Left colon (tissue), 2 donors: ENCODE measurements at regions of chr17 and their contacts with region 1.

Region 1: DNA sequence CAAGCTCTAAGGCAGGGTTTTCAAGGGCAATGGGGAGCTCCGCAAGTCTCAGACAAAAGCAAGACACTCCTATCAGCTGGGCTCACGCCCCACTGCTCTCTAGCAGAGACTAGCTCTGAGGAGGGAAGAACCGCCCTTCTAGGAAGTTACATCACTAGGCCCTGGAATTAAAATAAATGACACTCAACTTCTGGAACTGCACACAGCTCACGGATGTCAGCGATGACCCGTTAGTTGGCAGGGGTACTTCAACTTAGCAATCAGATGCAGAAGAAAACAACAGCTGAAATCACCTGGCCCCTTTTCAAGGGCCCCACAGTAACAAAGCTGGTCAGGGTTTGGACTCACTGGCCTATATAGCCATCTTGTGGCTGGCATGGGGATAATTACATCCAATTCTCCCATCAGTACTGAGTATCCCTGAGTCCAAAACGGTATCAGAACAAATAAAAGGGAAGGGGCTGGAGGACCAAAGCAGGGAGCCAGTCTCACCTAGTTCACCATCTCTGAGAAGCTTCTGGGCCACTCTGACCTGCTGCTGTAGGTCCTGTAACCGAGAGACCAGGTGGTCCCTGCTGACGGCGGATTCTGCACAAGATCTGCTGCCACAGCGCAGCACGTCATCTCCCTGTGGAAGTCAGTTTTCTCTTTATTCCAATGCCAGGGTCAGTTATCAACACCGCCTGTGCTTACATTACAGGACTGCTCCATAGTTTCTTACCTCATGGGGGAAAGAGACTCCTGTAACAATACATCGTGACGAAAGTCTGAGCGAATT is 22.2 kb downstream of the SERPINF1 start:
- DNase-seq: peak; percentile 44 to 73
- ATAC-seq: peak; percentile 30

Region 2: GRCh38 chr17:1724506-1725362 is 59.3 kb before region 1 on chr17 and contains the start of gene WDR81:
- intact Hi-C with region 1: loop called (anchors 5 to 10 kb)
- DNase-seq: peak; percentile 92 to 96
- ATAC-seq: peak; percentile 87
- total RNA-seq, gene WDR81: 16.1 to 23.4 TPM

Region 3: DNA sequence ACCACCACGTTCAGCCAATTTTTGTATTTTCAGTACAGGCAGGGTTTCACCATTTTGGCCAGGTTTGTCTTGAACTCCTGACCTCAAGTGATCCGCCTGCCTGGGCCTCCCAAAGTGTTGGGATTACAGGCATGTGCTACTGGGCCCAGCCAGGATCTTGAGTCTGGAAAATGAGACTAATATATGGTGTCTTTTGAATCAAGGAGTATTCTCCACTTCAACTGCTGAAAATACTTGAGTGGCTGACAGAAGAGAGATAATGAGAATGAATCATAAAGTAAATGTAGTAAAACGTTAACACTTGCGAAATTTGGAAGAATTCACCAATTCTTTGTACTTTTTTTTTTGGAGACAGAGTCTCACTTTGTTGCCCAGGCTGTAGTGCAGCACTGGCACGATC is 29.1 kb after region 1 on chr17:
- intact Hi-C with region 1: no loop called
- DNase-seq: no peak
- ATAC-seq: no peak